OCI-LY7 (cell line): ENCODE measurements at regions of chr11 and their contacts with region 1.

Region 1: DNA sequence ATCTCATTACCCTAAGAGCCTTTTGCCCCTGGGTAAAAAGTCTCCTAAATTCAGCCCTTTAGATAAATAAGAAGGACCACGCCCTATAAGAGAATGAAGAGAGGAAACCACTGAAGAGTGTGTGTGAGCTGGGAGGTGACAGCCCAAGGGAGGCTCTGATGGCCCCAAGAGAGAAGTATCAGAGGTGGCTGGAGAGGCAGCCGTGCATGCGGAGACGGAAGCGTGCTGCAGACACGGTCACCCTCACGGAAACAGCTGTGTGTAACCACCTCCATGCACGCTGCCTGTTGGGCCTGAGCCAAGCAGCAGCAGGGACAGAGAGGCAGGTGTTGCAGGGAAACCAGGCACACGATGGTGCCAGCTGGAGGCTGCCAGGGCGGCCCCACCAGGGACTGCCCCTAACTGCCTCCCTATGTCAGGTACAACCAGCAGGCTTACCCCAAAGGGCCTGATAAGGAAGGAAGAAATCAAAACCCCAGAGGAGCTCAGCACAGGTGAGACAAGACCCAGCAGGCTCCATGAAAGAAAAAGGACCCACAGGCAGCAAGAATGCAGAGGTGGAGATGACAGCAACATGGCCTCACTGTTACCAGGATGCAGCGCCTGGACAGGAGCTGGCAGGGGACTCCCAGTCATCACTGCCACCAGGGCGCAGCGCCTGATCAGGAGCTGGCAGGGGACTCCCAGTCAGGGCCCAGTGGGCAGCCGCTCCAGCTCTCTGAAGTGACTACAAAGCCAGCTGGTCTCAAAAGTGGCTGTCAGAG is 7.8 kb downstream of the LARGE2 start:
- DNase-seq: peak; percentile 96
- H3K4me3 ChIP-seq: peak overlapping the region; percentile 72
- H3K27ac ChIP-seq: peak overlapping the region; percentile 95
- H3K4me1 ChIP-seq: peaks cover 63% of the 10 kb centered on the region
- CTCF ChIP-seq: no peak

Region 2: DNA sequence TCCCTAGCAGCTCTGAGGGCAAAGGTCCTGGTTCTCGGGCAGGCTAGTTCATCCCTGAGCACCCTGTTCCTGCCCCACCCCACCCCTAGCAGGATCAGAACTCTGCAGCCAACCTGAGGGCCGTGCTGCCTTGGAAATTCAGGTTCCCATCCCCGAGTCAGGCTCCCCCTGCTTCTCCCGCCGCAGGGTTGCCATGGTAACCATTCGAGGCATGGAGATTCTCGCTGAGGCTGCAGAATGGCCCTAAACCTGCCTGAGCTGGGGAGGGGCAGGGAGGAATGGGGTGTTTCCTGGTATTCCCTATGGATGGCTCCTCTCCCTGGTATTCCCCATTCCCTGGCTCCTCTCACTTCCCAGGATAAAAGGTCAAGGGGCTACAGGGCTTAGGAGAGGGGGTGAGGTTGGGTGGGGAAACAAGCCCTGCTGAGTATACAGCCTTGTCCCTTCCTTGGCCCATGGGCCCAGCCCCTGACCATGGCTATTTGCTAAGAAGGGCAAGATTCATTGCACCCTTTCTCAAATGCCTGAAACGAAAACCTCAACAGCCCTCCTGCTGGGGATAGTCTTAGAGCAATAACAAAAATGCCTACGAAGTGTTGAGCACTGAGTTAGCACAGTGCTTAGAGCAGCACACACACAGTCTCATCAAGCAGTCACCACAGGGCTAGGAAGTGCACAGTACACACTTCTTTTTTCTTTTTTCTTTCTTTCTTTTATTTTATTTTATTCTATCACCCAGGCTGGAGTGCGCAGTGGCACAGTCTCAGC is 323.5 kb before region 1 on chr11:
- CTCF ChIA-PET with region 1: no interaction called
- POLR2A ChIA-PET with region 1: no interaction called
- intact Hi-C with region 1: no loop called
- DNase-seq: no peak
- H3K4me3 ChIP-seq: no peak overlapping the region
- H3K27ac ChIP-seq: no peak overlapping the region
- H3K4me1 ChIP-seq: no peaks in the 10 kb centered on the region
- CTCF ChIP-seq: no peak

Region 3: GRCh38 chr11:45917623-45918330 is 12.4 kb before region 1 on chr11 and contains the start of gene PEX16:
- CTCF ChIA-PET with region 1: interaction called, 7 read pairs
- POLR2A ChIA-PET with region 1: interaction called, 33 read pairs
- intact Hi-C with region 1: loop called (anchors 1 kb)
- DNase-seq: peak; percentile 97
- H3K4me3 ChIP-seq: peak within 1 kb of the TSS; percentile 93
- H3K27ac ChIP-seq: peak within 1 kb of the TSS; percentile 88
- H3K4me1 ChIP-seq: peaks cover 41% of the 10 kb centered on the region
- CTCF ChIP-seq: no peak
- total RNA-seq, gene PEX16: 41.0 TPM in 2 replicates